Panc1 (cell line): ENCODE measurements at regions of chr10 and their contacts with region 1.

Region 1: GRCh38 chr10:49538381-49539319 is at the start of gene ERCC6:
- DNase-seq: peak; percentile 91
- ATAC-seq: peak; percentile 98
- H3K4me3 ChIP-seq: peak within 1 kb of the TSS; percentile 78 to 98
- H3K27ac ChIP-seq: peak within 1 kb of the TSS; percentile 82
- H3K4me1 ChIP-seq: peaks cover 10% of the 10 kb centered on the region; the same call in 1 of the 2 replicates
- H3K27me3 ChIP-seq: peaks cover 8% of the 10 kb centered on the region
- CTCF ChIP-seq: no peak
- total RNA-seq, gene ERCC6: 19.1 TPM

Region 2: GRCh38 chr10:48306265-48306869 is 1232.3 kb before region 1 on chr10 and contains the start of gene MAPK8:
- CTCF ChIA-PET with region 1: no interaction called
- POLR2A ChIA-PET with region 1: interaction called, 10 read pairs
- in situ Hi-C with region 1: no loop called
- intact Hi-C with region 1: no loop called
- DNase-seq: peak; percentile 47
- ATAC-seq: peak; percentile 94
- H3K4me3 ChIP-seq: peak within 1 kb of the TSS; percentile 80 to 92
- H3K27ac ChIP-seq: peak within 1 kb of the TSS; percentile 86
- H3K4me1 ChIP-seq: peaks cover 31% of the 10 kb centered on the region
- H3K27me3 ChIP-seq: no peaks in the 10 kb centered on the region; the same call in 1 of the 2 replicates
- CTCF ChIP-seq: no peak
- total RNA-seq, gene MAPK8: 66.6 TPM

Region 3: DNA sequence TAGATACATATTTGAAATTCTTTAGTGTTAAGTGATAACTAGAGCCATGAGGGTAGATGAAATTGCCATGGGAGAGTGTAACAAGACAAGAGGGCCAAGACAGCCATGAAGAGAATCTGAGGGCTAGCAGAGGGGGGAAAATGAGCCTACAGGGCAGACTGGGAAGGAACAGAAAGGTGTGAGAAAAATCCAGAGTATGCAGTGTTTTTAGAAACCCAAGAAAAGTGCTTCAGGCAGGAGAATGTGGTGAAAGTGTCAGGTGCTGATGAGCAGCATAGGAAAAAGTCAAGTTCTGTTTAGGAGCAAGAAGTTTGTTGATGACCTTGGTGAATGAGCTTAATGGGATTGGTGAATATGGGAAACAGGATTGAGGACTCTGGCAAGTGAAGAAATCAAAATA is 1169.1 kb before region 1 on chr10:
- CTCF ChIA-PET with region 1: no interaction called
- POLR2A ChIA-PET with region 1: interaction called, 10 read pairs
- in situ Hi-C with region 1: no loop called
- intact Hi-C with region 1: no loop called
- DNase-seq: no peak
- ATAC-seq: no peak
- H3K4me3 ChIP-seq: no peak overlapping the region
- H3K27ac ChIP-seq: no peak overlapping the region
- H3K4me1 ChIP-seq: peaks cover 8% of the 10 kb centered on the region; the same call in 1 of the 2 replicates
- H3K27me3 ChIP-seq: no peaks in the 10 kb centered on the region
- CTCF ChIP-seq: no peak

Region 4: DNA sequence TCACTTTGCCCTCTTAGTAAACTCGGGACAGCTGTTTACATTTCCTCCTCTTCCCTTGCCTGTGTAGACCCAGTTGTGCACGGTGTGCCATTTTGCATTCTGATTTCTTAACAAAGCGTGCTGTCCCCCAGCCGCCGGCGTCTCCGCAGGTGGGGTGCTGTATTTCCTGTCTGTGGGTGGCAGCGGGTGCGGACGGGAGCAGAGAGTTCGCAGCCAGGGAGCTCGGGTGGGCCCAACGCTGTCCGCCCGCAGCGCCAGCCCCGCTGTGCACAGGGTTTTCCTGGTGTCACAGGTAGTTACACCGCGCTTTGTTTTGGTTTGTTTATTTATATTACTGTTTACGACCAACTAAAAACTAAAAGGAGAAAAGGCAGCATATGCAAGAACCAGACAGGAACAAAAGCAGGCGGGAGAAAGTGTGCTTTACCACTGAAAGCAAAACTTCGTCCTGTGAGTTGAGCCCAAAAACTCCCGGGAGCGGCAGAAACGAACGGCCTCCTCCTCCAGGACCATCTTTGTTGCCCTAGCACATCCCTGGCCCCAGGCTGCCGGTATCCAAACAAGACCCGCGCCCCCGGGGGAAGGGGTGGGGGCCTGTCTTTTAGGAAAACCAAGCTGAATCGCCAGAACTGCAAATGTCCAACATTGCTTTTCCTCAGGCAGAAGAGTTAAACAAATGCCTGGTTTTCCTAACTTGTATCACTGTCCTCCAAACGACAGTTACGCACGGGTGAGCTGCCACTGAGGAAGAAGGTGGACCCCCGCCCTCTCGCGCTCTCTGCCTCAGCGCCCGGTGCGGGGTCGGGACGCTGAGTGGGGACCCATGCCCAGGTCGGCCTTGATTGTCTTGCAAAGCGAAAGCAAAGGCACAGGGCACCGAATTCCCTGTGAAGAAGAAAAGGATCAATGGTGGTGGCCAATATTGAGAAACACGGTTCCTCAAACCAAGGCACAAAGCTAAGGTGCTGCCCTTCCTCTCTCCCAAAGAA is 96.9 kb before region 1 on chr10:
- CTCF ChIA-PET with region 1: no interaction called
- POLR2A ChIA-PET with region 1: no interaction called
- in situ Hi-C with region 1: no loop called
- intact Hi-C with region 1: no loop called
- DNase-seq: no peak
- ATAC-seq: no peak
- H3K4me3 ChIP-seq: no peak overlapping the region
- H3K27ac ChIP-seq: no peak overlapping the region
- H3K4me1 ChIP-seq: no peaks in the 10 kb centered on the region
- H3K27me3 ChIP-seq: no peaks in the 10 kb centered on the region
- CTCF ChIP-seq: no peak

Region 5: GRCh38 chr10:49629431-49629881 is 90.8 kb after region 1 on chr10:
- CTCF ChIA-PET with region 1: no interaction called
- POLR2A ChIA-PET with region 1: no interaction called
- in situ Hi-C with region 1: no loop called
- intact Hi-C with region 1: no loop called
- DNase-seq: no peak
- ATAC-seq: no peak
- H3K4me3 ChIP-seq: no peak overlapping the region
- H3K27ac ChIP-seq: no peak overlapping the region
- H3K4me1 ChIP-seq: no peaks in the 10 kb centered on the region
- H3K27me3 ChIP-seq: peaks cover 3% of the 10 kb centered on the region; the same call in 1 of the 2 replicates
- CTCF ChIP-seq: no peak

Region 6: DNA sequence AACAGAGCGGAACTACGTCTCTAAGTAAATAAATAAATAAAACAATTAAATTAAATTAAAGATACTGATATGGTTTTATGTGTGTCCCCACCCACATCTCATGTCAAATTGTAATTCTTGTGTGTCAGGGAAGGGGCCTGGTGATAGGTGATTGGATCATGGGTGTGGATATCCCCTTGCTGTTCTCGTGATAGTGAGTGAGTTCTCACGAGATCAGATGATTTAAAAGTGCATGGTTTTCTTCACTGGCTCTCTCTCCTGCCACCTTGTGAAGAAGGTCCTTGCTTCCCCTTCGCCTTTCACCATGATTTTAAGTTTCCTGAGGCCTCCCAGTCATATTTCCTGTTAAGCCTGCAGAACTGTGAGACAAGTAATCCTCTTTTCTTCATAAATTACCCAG is 252.4 kb after region 1 on chr10:
- CTCF ChIA-PET with region 1: interaction called, 10 read pairs
- POLR2A ChIA-PET with region 1: no interaction called
- in situ Hi-C with region 1: no loop called
- intact Hi-C with region 1: no loop called
- DNase-seq: no peak
- ATAC-seq: no peak
- H3K4me3 ChIP-seq: no peak overlapping the region
- H3K27ac ChIP-seq: no peak overlapping the region
- H3K4me1 ChIP-seq: no peaks in the 10 kb centered on the region
- H3K27me3 ChIP-seq: peaks cover 1% of the 10 kb centered on the region; the same call in 1 of the 2 replicates
- CTCF ChIP-seq: no peak